ENCODE measurements at regions of chr12 and their contacts with region 1.

Region 1: GRCh38 chr12:115752913-115753726 is 524.4 kb downstream of the MED13L start:
- DNase-seq: peak in 4 of 5 donors; percentile 29 to 47 (median 36)
- ATAC-seq: peak; percentile 80 to 94 (median 88)
- H3K4me3 ChIP-seq: no peak overlapping the region
- H3K27ac ChIP-seq: no peak overlapping the region
- H3K4me1 ChIP-seq: peaks cover 0 to 16% (median 3%) of the 10 kb centered on the region in 12 donors
- H3K27me3 ChIP-seq: peaks cover 0 to 26% (median 11%) of the 10 kb centered on the region in 9 donors
- CTCF ChIP-seq: peak; percentile 40 to 79 (median 70)
- POLR2A ChIP-seq: no peak

Region 2: GRCh38 chr12:114668151-114668885 is 1084.8 kb before region 1 on chr12:
- intact Hi-C with region 1: loop called (anchors 1 to 2 kb)
- DNase-seq: peak; percentile 76 to 87 (median 82)
- ATAC-seq: peak; percentile 82 to 93 (median 90)
- H3K4me3 ChIP-seq: peak overlapping the region in 11 of 12 donors; percentile 23 to 60 (median 50)
- H3K27ac ChIP-seq: peak overlapping the region in 9 of 12 donors; percentile 11 to 63 (median 45)
- H3K4me1 ChIP-seq: peaks cover 0 to 46% (median 8%) of the 10 kb centered on the region in 12 donors
- H3K27me3 ChIP-seq: peaks cover 24 to 85% (median 44%) of the 10 kb centered on the region in 9 donors
- CTCF ChIP-seq: peak; percentile 19 to 78 (median 62)
- POLR2A ChIP-seq: no peak

Region 3: DNA sequence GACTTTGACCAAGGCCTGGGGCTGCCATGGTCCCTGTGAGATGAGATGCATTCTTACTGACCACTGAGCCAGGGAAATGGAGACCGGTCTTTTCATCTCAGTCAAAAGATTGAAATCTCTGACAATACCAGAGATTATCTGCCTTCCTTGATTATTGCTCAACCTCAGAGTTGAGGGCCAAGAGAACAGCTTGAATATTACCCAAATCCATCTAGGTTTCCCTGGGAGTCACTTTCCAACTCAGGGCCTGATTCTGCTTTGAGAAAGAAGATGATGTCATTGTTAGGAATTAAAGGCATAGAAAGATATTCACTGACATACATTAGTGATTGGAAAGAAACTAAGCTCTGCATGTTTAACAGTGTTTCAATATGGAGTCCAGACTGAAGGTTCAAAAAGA is 553.3 kb before region 1 on chr12:
- intact Hi-C with region 1: loop called in 1 of 10 experiments (anchors 10 kb)
- DNase-seq: no peak
- ATAC-seq: peak in 1 of 4 donors; percentile 34
- H3K4me3 ChIP-seq: no peak overlapping the region
- H3K27ac ChIP-seq: no peak overlapping the region
- H3K4me1 ChIP-seq: no peaks in the 10 kb centered on the region
- H3K27me3 ChIP-seq: no peaks in the 10 kb centered on the region
- CTCF ChIP-seq: no peak
- POLR2A ChIP-seq: no peak

Region 4: GRCh38 chr12:115504306-115504901 is 248.7 kb before region 1 on chr12:
- intact Hi-C with region 1: loop called in 1 of 10 experiments (anchors 5 kb)
- DNase-seq: peak in 4 of 5 donors; percentile 34 to 55 (median 46)
- ATAC-seq: peak; percentile 36 to 82 (median 64)
- H3K4me3 ChIP-seq: no peak overlapping the region
- H3K27ac ChIP-seq: peak overlapping the region in 11 of 12 donors; percentile 41 to 84 (median 71)
- H3K4me1 ChIP-seq: peaks cover 0 to 48% (median 25%) of the 10 kb centered on the region in 12 donors
- H3K27me3 ChIP-seq: no peaks in the 10 kb centered on the region
- CTCF ChIP-seq: peak in 1 of 12 donors; percentile 21
- POLR2A ChIP-seq: no peak

Region 5: DNA sequence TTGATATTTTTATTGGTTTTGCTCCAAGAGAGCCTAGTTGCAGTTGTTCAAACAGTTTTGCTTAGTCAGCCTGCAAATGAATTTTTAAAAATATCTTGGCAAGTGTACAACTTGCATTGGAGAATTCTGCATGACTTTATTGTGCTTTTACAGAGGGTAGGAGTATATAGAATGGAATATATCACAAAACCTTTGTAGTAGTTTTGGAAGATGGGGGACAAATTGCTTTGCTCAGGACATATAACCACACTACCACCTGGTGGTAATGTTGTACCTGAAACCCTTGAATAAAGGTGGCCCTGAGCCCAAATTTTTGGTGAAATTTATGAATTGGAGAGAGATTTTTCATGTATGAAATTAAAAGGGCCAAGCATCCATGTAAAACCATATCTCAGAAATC is 120.8 kb before region 1 on chr12:
- intact Hi-C with region 1: loop called in 6 of 10 experiments (anchors 2 to 10 kb)
- DNase-seq: no peak
- ATAC-seq: no peak
- H3K4me3 ChIP-seq: no peak overlapping the region
- H3K27ac ChIP-seq: no peak overlapping the region
- H3K4me1 ChIP-seq: no peaks in the 10 kb centered on the region
- H3K27me3 ChIP-seq: no peaks in the 10 kb centered on the region
- CTCF ChIP-seq: peak in 11 of 12 donors; percentile 12 to 56 (median 36)
- POLR2A ChIP-seq: no peak

Region 6: GRCh38 chr12:115828186-115828585 is 75.1 kb after region 1 on chr12:
- intact Hi-C with region 1: no loop called
- DNase-seq: no peak
- ATAC-seq: no peak
- H3K4me3 ChIP-seq: no peak overlapping the region
- H3K27ac ChIP-seq: no peak overlapping the region
- H3K4me1 ChIP-seq: peaks cover 0 to 6% (median 0%) of the 10 kb centered on the region in 12 donors
- H3K27me3 ChIP-seq: no peaks in the 10 kb centered on the region
- CTCF ChIP-seq: no peak
- POLR2A ChIP-seq: no peak

Region 7: GRCh38 chr12:115916910-115917668 is 164.0 kb after region 1 on chr12:
- intact Hi-C with region 1: loop called in 7 of 10 experiments (anchors 5 to 10 kb)
- DNase-seq: peak; percentile 34 to 76 (median 53)
- ATAC-seq: peak in 3 of 4 donors; percentile 55 to 78 (median 74)
- H3K4me3 ChIP-seq: peak overlapping the region in 2 of 12 donors; percentile 15 to 22
- H3K27ac ChIP-seq: no peak overlapping the region
- H3K4me1 ChIP-seq: peaks cover 0 to 4% (median 0%) of the 10 kb centered on the region in 12 donors
- H3K27me3 ChIP-seq: peaks cover 0 to 57% (median 21%) of the 10 kb centered on the region in 9 donors
- CTCF ChIP-seq: peak; percentile 84 to 98 (median 94)
- POLR2A ChIP-seq: no peak